ENCODE measurements at regions of chr6 and their contacts with region 1.

Region 1: GRCh38 chr6:97437087-97437486 is 154.1 kb upstream of the MMS22L start:
- DNase-seq: peak; percentile 71
- H3K4me3 ChIP-seq: no peak overlapping the region
- H3K27ac ChIP-seq: no peak overlapping the region
- H3K4me1 ChIP-seq: peaks cover 18% of the 10 kb centered on the region
- H3K27me3 ChIP-seq: no peaks in the 10 kb centered on the region
- CTCF ChIP-seq: peak; percentile 80

Region 2: GRCh38 chr6:99348288-99349170 is 1911.4 kb after region 1 on chr6:
- CTCF ChIA-PET with region 1: interaction called, 10 read pairs
- POLR2A ChIA-PET with region 1: no interaction called
- intact Hi-C with region 1: no loop called
- DNase-seq: no peak
- H3K4me3 ChIP-seq: peak overlapping the region; percentile 70
- H3K27ac ChIP-seq: no peak overlapping the region
- H3K4me1 ChIP-seq: no peaks in the 10 kb centered on the region
- H3K27me3 ChIP-seq: no peaks in the 10 kb centered on the region
- CTCF ChIP-seq: no peak